Naive thymus-derived CD4-positive, alpha-beta T cell (primary cell): ENCODE measurements at regions of chr9 and their contacts with region 1.

Region 1: GRCh38 chr9:3461237-3461636 is 64.6 kb downstream of the RFX3 start:
- DNase-seq: no peak
- ATAC-seq: no peak
- H3K4me3 ChIP-seq: no peak overlapping the region
- H3K4me3 Mint-ChIP-seq: no peak overlapping the region
- H3K27ac ChIP-seq: no peak overlapping the region
- H3K27ac Mint-ChIP-seq: no peak overlapping the region
- H3K4me1 ChIP-seq: no peaks in the 10 kb centered on the region
- H3K4me1 Mint-ChIP-seq: peaks cover 0 to 8% (median 3%) of the 10 kb centered on the region in 7 donors
- H3K27me3 ChIP-seq: no peaks in the 10 kb centered on the region
- H3K27me3 Mint-ChIP-seq: no peaks in the 10 kb centered on the region

Region 2: GRCh38 chr9:3436629-3437420 is 24.4 kb before region 1 on chr9:
- CTCF ChIA-PET with region 1: no interaction called
- POLR2A ChIA-PET with region 1: no interaction called
- intact Hi-C with region 1: no loop called
- DNase-seq: no peak
- ATAC-seq: no peak
- H3K4me3 ChIP-seq: no peak overlapping the region
- H3K4me3 Mint-ChIP-seq: no peak overlapping the region
- H3K27ac ChIP-seq: no peak overlapping the region
- H3K27ac Mint-ChIP-seq: no peak overlapping the region
- H3K4me1 ChIP-seq: no peaks in the 10 kb centered on the region
- H3K4me1 Mint-ChIP-seq: peaks cover 3 to 26% (median 11%) of the 10 kb centered on the region in 7 donors
- H3K27me3 ChIP-seq: no peaks in the 10 kb centered on the region
- H3K27me3 Mint-ChIP-seq: no peaks in the 10 kb centered on the region

Region 3: DNA sequence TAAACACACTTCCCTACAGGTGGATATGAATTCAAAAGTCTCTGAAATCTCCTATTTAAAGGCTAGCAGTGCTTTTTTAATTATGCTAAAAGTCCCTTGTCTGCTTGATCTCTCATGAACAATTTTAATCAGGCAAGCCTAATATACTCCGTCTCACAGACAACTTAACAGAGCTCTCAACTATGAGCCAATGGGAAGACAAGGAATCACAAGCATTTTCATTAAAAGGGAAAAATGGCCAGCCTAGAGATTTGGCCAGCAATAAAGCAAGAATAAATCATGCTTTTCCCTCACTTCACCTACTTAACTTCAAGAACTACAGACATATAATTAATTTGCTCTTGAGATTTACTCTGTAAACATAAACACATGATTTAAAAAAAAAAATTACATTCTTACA is 13.4 kb before region 1 on chr9:
- CTCF ChIA-PET with region 1: no interaction called
- POLR2A ChIA-PET with region 1: interaction called, 3 read pairs
- intact Hi-C with region 1: loop called in 1 of 2 experiments (anchors 2 kb)
- DNase-seq: no peak
- ATAC-seq: no peak
- H3K4me3 ChIP-seq: no peak overlapping the region
- H3K4me3 Mint-ChIP-seq: no peak overlapping the region
- H3K27ac ChIP-seq: no peak overlapping the region
- H3K27ac Mint-ChIP-seq: peak overlapping the region in 2 of 9 donors; percentile 28 to 46
- H3K4me1 ChIP-seq: no peaks in the 10 kb centered on the region
- H3K4me1 Mint-ChIP-seq: peaks cover 0 to 27% (median 9%) of the 10 kb centered on the region in 7 donors
- H3K27me3 ChIP-seq: no peaks in the 10 kb centered on the region
- H3K27me3 Mint-ChIP-seq: no peaks in the 10 kb centered on the region

Region 4: GRCh38 chr9:3719286-3719685 is 258.0 kb after region 1 on chr9:
- CTCF ChIA-PET with region 1: no interaction called
- POLR2A ChIA-PET with region 1: no interaction called
- intact Hi-C with region 1: no loop called
- DNase-seq: no peak
- ATAC-seq: no peak
- H3K4me3 ChIP-seq: no peak overlapping the region
- H3K4me3 Mint-ChIP-seq: no peak overlapping the region
- H3K27ac ChIP-seq: no peak overlapping the region
- H3K27ac Mint-ChIP-seq: no peak overlapping the region
- H3K4me1 ChIP-seq: no peaks in the 10 kb centered on the region
- H3K4me1 Mint-ChIP-seq: no peaks in the 10 kb centered on the region
- H3K27me3 ChIP-seq: no peaks in the 10 kb centered on the region
- H3K27me3 Mint-ChIP-seq: peaks cover 0 to 18% (median 8%) of the 10 kb centered on the region in 5 donors